ENCODE measurements at regions of chr1 and their contacts with region 1.

Region 1: DNA sequence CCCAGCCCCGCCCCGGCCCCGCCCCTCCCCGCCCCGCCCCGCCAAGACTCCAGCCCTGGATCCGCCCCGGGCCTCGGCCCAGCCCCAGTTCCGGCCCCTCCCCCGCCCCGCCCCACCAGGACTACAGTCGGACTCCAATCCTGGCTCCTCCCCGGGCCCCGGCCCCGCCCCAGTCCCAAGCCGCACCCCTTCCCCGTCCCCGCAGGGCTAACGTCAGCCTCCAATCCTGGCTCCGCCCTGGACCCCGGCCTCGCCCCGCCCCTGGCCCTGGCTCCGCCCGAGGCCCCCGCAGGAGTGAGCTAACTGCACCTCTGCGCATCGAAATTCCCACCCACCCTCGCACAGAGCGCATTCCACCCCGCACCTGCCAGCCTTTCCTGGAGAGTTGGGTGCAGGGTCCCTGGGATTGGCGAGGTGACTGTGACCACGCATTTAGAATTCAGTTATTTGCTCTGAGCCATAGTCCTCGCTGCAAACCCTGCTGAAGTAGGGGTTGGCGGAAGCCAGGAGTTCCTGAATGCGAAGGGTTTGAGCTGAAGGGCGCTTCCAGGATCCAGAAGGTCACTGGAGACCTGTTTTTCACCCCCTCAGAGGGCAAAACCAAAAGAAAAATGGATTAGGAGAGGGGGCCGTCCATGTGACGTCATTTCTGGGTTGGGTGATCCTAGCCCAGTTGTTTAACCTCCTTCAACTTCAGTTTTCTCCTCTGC is 588 bp upstream of the IGSF8 start:
- DNase-seq: peak; percentile 99
- ATAC-seq: peak; percentile 89
- H3K4me3 Mint-ChIP-seq: peak overlapping the region; percentile 73
- H3K27ac Mint-ChIP-seq: peak overlapping the region; percentile 88
- H3K4me1 Mint-ChIP-seq: peaks cover 55% of the 10 kb centered on the region
- H3K27me3 Mint-ChIP-seq: no peaks in the 10 kb centered on the region

Region 2: DNA sequence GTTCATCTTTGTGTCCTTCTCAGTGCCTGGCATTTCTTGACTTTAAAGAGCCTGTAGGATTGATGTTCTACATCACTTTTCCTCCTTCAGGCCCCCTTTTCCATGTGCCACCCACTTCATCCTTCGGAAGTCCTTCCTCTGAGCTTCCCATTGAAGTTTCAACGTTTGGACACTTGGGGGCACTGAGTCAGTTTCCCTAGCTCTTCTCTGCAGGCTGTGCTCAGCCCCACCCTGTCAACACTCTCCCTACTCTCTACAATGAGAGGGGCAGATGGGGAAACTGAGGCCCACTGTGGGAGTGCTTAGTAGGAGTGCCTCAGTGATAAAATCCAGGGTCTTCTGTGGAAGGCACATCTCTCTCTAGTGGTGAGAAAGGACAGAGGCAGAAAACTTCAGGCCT is 40.9 kb before region 1 on chr1:
- CTCF ChIA-PET with region 1: no interaction called
- POLR2A ChIA-PET with region 1: no interaction called
- DNase-seq: no peak
- ATAC-seq: no peak
- H3K4me3 Mint-ChIP-seq: no peak overlapping the region
- H3K27ac Mint-ChIP-seq: no peak overlapping the region
- H3K4me1 Mint-ChIP-seq: no peaks in the 10 kb centered on the region
- H3K27me3 Mint-ChIP-seq: peaks cover 37% of the 10 kb centered on the region

Region 3: DNA sequence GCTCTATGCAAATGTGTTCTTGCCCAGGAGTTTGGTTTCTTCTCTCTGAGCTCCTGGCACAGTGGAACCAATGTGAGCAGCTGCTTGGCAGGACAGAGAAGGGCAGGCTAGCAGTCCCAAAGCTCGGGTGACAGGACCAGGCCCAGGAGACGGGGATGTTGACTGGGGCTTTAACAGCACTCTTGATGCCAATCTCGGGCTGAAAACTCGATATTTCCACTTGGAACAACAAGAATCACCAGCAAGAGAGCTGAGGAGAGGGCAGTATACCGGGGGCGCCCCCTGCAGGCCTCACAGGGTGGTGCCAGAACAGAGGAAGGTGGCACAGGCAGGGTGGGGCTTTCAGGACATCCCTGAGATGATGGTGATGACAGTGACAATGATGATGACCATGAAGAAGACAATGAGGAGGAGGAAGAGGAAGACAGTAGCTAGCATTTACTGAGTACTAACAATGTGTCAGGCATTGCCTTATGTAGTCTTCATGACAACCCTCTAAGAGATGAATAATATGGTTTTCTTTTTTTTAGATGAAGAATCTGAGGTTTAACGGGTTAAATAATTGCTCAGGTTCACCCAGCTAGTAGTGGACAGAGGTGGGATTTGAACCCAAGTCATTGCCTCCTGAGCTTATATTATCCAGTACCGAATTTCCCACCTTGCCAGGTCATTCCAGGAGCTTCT is 20.4 kb before region 1 on chr1:
- CTCF ChIA-PET with region 1: interaction called, 25 read pairs
- POLR2A ChIA-PET with region 1: interaction called, 5 read pairs
- DNase-seq: peak; percentile 78
- ATAC-seq: peak; percentile 93
- H3K4me3 Mint-ChIP-seq: no peak overlapping the region
- H3K27ac Mint-ChIP-seq: no peak overlapping the region
- H3K4me1 Mint-ChIP-seq: peaks cover 5% of the 10 kb centered on the region
- H3K27me3 Mint-ChIP-seq: peaks cover 49% of the 10 kb centered on the region

Region 4: DNA sequence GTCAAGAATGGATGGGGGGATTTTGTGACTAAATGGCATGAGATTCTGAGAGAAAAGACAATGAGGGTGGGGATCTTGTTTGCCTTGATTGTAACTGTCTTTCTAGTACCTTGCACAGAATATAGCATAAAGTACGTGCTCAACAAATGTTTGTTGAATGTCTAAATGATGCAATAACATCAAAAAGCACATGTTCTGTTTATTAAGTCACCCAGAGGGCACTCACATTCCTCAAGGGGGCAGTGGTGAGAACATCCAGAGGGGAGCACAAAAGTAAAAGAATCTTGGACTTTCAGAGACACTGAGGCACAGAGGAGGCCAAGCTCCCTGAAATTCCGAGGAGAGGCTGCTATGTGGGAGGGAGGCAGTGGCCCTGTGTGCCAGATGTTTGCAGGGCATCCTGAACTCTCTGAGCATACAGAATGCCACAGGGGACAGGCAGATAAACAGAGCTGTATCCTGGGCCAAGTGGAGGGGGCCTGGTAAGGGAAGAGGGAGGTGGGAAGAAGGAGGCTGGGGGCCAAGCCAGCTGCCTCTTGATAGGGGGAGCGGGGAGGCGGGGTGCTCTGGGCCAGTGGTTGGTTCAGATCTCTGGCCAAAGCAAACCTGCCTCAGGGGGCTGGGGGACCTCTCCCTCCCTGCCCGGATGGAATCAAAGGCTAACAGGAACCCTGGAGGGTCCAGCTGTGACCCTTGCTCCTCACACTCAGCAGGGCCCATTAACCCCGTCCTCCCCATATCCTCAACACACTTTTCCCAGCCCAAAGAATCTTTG is 10.1 kb after region 1 on chr1:
- CTCF ChIA-PET with region 1: interaction called, 11 read pairs
- POLR2A ChIA-PET with region 1: no interaction called
- DNase-seq: peak; percentile 60
- ATAC-seq: no peak
- H3K4me3 Mint-ChIP-seq: no peak overlapping the region
- H3K27ac Mint-ChIP-seq: no peak overlapping the region
- H3K4me1 Mint-ChIP-seq: no peaks in the 10 kb centered on the region
- H3K27me3 Mint-ChIP-seq: peaks cover 5% of the 10 kb centered on the region

Region 5: DNA sequence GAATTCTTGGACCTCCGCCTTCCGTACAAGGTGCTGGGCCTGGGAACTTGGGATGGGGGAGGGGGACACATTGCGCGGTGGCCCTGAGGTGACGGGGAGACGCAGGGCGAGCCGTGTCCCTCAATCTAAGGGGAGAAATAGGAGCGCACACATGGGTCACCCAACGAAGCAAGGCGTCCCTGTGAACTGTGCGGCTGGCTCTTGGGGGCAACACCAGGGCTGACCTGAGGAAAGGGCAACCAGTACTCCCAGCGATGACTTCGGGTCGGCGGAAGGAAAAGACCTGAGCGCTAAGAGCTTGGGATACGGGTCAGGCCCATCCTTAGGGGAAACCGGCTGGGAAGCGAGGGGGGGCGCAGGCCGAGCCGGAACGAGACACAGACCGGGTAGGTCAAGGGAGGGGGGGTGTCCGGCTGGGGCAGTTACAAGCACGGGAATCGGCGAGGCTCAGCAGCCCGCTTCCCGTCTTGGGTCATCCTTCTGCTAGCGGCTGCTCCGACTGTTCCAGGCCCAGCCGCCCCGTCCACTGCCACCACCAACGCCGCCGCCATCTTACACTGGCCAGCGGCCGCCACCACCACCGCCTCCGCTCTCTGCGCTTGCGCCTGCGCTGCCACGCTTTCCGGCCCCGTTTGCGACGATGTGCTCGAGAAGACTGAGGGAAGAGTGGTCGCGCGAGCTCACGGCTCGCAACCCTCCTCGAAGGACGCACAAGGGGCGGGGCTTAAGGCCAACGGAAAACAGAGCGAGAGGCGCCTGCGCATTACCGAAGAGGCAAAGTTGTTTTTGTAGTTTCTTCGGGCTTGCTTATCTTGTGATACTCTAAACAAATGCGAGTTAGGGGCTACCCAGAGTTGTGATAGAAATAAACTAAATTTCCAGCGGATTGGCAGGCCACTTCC is 163.1 kb after region 1 on chr1 and contains the start of gene DCAF8:
- CTCF ChIA-PET with region 1: interaction called, 15 read pairs
- POLR2A ChIA-PET with region 1: interaction called, 3 read pairs
- DNase-seq: peak; percentile 99
- ATAC-seq: peak; percentile 92
- H3K4me3 Mint-ChIP-seq: peak within 1 kb of the TSS; percentile 96
- H3K27ac Mint-ChIP-seq: peak within 1 kb of the TSS; percentile 95
- H3K4me1 Mint-ChIP-seq: peaks cover 33% of the 10 kb centered on the region
- H3K27me3 Mint-ChIP-seq: no peaks in the 10 kb centered on the region
- total RNA-seq, gene DCAF8: 81.9 to 85.9 TPM

Measured in activated CD8-positive, alpha-beta T cell treated with anti-CD3 and anti-CD28 coated beads, Interleukin-2, amount 10 ng/mL, durations not matched to agents 7 days and 5 days (primary cell).